Heart right ventricle (tissue), 16 donors: ENCODE measurements at regions of chr13 and their contacts with region 1.

Region 1: DNA sequence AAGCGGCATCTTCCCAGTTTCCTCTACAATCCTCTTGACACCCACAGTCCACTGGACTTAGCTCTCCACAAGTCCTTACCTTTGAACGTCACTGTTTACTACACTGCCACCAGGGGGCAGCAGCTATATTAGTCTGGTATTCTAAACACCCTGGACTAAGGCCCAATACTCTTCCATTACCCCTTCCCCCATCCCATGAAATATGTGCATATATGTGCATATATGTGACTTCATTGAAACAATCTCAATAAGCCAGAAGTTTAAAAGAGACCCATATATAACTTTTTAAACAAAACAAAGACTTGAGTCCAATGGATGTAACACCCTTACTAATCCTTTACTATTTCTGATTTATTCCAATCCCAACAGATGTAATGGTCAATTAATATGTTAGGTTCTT is 15.5 kb downstream of the GGACT start:
- DNase-seq: peak; percentile 46 to 61
- ATAC-seq: peak in 5 of 8 donors; percentile 62 to 70 (median 69)
- H3K4me3 ChIP-seq: no peak overlapping the region
- H3K27ac ChIP-seq: no peak overlapping the region
- H3K4me1 ChIP-seq: no peaks in the 10 kb centered on the region
- H3K27me3 ChIP-seq: no peaks in the 10 kb centered on the region
- CTCF ChIP-seq: peak; percentile 30 to 78 (median 68)

Region 2: GRCh38 chr13:100514788-100515409 is 58.2 kb before region 1 on chr13:
- intact Hi-C with region 1: no loop called
- DNase-seq: peak; percentile 74 to 76
- ATAC-seq: peak; percentile 87 to 96 (median 91)
- H3K4me3 ChIP-seq: no peak overlapping the region
- H3K27ac ChIP-seq: no peak overlapping the region
- H3K4me1 ChIP-seq: peaks cover 0 to 25% (median 7%) of the 10 kb centered on the region in 9 donors
- H3K27me3 ChIP-seq: no peaks in the 10 kb centered on the region
- CTCF ChIP-seq: peak; percentile 86 to 99 (median 96)

Region 3: GRCh38 chr13:100674848-100675660 is 101.9 kb after region 1 on chr13:
- intact Hi-C with region 1: loop called in 1 of 10 experiments (anchors 2 kb)
- DNase-seq: peak; percentile 100
- ATAC-seq: peak; percentile 97 to 99 (median 98)
- H3K4me3 ChIP-seq: peak overlapping the region; percentile 29 to 100 (median 79)
- H3K27ac ChIP-seq: peak overlapping the region; percentile 80 to 93 (median 88)
- H3K4me1 ChIP-seq: peaks cover 0 to 22% (median 11%) of the 10 kb centered on the region in 9 donors
- H3K27me3 ChIP-seq: peaks cover 0 to 9% (median 0%) of the 10 kb centered on the region in 7 donors
- CTCF ChIP-seq: peak in 7 of 9 donors; percentile 15 to 65 (median 44)

Region 4: GRCh38 chr13:101109005-101109404 is 535.9 kb after region 1 on chr13:
- intact Hi-C with region 1: loop called in 3 of 10 experiments (anchors 10 kb)
- DNase-seq: no peak
- ATAC-seq: no peak
- H3K4me3 ChIP-seq: no peak overlapping the region
- H3K27ac ChIP-seq: no peak overlapping the region
- H3K4me1 ChIP-seq: peaks cover 0 to 4% (median 0%) of the 10 kb centered on the region in 9 donors
- H3K27me3 ChIP-seq: no peaks in the 10 kb centered on the region
- CTCF ChIP-seq: no peak

Region 5: DNA sequence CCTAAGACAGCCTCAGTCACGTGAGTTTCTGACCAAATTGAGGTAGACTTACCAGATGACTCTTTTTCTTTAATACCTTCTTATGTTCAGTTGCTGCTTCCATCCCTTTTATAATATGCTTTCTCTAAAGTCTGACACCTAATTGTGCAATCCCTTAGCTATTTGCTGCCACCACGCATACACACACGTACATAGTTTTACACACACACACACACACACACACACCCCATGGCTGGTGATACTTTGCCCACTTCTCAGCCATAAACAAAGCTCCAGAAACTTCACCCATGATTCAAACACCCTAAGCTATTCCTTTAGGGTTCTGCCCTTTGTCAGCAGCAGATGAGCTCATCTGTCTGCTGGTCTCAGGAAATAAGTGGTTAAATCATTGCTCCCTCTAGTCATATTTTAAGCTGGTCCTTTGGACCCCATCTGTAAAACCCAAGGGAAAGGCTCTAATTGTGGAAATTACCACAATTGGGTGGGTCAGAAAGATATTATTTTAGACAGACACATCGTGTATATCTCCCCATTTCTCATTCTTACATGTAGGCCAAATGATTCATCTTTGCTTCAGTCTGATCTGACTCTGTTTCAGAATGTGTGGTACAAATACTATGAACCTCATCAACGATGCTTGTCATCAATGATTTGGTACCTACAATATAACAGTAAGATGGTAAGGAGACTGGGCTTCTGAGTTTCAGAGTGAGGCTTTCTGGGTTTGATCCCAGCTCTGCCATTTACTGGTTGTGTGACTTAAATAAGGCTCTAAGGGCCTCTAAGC is 774.0 kb after region 1 on chr13:
- intact Hi-C with region 1: no loop called
- DNase-seq: no peak
- ATAC-seq: no peak
- H3K4me3 ChIP-seq: no peak overlapping the region
- H3K27ac ChIP-seq: no peak overlapping the region
- H3K4me1 ChIP-seq: no peaks in the 10 kb centered on the region
- H3K27me3 ChIP-seq: no peaks in the 10 kb centered on the region
- CTCF ChIP-seq: no peak